CD14-positive monocyte (primary cell): ENCODE measurements at regions of chr5 and their contacts with region 1.

Region 1: DNA sequence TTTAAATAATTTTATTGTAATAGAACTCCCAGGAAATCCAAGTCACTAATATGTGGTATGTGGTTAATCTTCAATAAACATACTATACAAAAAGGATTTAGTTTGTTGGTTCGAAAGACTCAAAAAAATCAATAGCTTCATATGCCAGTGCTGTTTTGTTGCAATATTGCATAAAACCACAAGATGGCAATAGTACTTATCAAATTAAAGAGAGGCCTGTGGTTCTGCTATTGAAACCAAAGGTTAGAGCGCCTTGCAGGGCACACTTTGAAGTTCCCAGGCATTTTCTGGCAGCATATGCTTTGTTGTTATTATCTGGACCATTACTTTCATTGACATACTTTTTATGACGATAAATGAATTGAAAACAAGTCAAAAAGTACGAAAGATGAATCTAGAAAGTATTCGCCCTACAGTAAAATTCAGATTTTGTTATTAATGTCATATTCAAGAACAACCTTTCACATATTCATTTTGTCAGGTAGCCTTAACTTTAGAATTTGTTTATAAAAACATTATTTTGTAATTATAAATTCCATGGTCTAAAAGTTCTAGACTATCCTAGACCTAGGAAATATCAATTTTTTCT is 316.3 kb downstream of the MCTP1 start:
- DNase-seq: peak; percentile 48 to 74 (median 65)
- H3K4me3 ChIP-seq: no peak overlapping the region
- H3K4me3 Mint-ChIP-seq: no peak overlapping the region
- H3K27ac ChIP-seq: no peak overlapping the region
- H3K27ac Mint-ChIP-seq: peak overlapping the region in 2 of 7 donors; percentile 19 to 73
- H3K4me1 ChIP-seq: no peaks in the 10 kb centered on the region
- H3K4me1 Mint-ChIP-seq: peaks cover 2% of the 10 kb centered on the region
- H3K27me3 ChIP-seq: no peaks in the 10 kb centered on the region
- H3K27me3 Mint-ChIP-seq: no peaks in the 10 kb centered on the region
- CTCF ChIP-seq: peak; percentile 85

Region 2: DNA sequence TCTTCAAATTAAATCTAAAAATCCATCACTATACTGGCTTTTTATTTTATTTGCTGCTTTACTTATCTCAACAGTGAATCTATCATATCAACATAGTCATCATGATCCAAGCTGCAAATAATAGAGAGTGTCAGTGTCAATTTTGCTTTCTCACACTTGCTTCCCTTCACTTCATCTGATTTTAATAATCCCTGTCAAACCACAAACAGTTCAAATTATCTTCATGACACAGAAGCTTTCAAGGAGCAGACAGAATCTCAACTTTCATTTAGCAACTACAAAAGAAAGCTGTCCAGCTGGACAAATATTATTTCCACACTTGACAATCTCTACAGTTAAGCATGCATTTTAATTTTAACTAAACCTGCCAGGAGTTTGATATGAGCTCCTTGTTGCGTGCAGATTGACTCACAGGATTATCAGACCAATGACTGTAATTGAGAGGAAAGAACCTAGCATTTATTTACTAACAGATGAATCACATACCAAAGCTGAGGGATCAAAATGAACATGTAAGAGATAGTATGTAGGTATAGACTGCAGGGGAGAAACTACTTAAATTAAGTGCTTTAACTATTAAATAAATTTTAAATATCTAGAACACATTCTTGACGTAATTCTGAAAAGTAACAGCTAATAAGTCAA is 406.2 kb before region 1 on chr5:
- intact Hi-C with region 1: no loop called
- DNase-seq: no peak
- H3K4me3 ChIP-seq: no peak overlapping the region
- H3K4me3 Mint-ChIP-seq: no peak overlapping the region
- H3K27ac ChIP-seq: no peak overlapping the region
- H3K27ac Mint-ChIP-seq: no peak overlapping the region
- H3K4me1 ChIP-seq: no peaks in the 10 kb centered on the region
- H3K4me1 Mint-ChIP-seq: no peaks in the 10 kb centered on the region
- H3K27me3 ChIP-seq: no peaks in the 10 kb centered on the region
- H3K27me3 Mint-ChIP-seq: peaks cover 0 to 3% (median 0%) of the 10 kb centered on the region in 3 donors
- CTCF ChIP-seq: no peak

Region 3: GRCh38 chr5:95057615-95058014 is 89.0 kb after region 1 on chr5:
- intact Hi-C with region 1: no loop called
- DNase-seq: peak in 1 of 3 donors; percentile 31
- H3K4me3 ChIP-seq: no peak overlapping the region
- H3K4me3 Mint-ChIP-seq: peak overlapping the region in 1 of 2 donors; percentile 41
- H3K27ac ChIP-seq: no peak overlapping the region
- H3K27ac Mint-ChIP-seq: peak overlapping the region in 1 of 7 donors; percentile 42
- H3K4me1 ChIP-seq: peaks cover 12 to 21% of the 10 kb centered on the region in 2 donors
- H3K4me1 Mint-ChIP-seq: peaks cover 23% of the 10 kb centered on the region
- H3K27me3 ChIP-seq: no peaks in the 10 kb centered on the region
- H3K27me3 Mint-ChIP-seq: no peaks in the 10 kb centered on the region
- CTCF ChIP-seq: no peak

Region 4: DNA sequence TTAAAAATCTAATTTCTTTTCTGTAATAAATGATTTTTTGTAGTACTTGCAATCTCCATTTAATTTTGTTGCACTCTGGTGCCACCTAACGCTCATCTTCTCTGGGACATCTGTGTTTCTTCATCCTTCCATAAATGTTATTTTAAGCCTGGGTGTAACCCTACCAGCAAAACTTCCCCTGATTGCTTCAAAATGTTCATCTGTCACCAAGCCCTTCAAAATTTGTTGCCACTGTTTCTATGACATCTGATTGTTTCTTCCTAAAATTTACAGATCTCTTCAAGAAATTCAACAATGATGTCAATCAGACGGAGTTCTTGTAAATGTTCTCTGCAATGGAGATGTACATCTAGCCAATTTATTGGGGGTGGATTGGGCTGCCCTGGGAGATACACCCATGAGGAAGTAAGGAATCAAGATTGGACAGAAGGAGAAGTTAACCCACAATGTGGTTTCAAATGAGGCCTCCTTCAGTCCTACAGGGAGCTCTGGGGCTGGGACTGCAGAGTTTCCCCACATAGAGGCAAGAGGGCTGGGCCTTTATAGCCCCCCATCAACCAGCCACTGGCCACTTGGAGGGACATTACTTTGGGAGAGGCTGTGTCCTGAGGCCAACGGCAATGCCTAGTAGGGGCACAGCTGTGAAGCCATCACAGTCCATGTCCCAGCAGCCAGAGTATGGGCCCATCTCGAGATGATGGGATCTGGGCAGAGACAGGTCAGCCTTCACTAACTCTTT is 293.0 kb after region 1 on chr5:
- intact Hi-C with region 1: loop called (anchors 5 kb)
- DNase-seq: peak; percentile 77 to 89 (median 83)
- H3K4me3 ChIP-seq: no peak overlapping the region
- H3K4me3 Mint-ChIP-seq: no peak overlapping the region
- H3K27ac ChIP-seq: peak overlapping the region; percentile 92 to 99
- H3K27ac Mint-ChIP-seq: peak overlapping the region; percentile 94 to 97 (median 96)
- H3K4me1 ChIP-seq: peaks cover 20 to 23% of the 10 kb centered on the region in 2 donors
- H3K4me1 Mint-ChIP-seq: peaks cover 24% of the 10 kb centered on the region
- H3K27me3 ChIP-seq: no peaks in the 10 kb centered on the region
- H3K27me3 Mint-ChIP-seq: no peaks in the 10 kb centered on the region
- CTCF ChIP-seq: peak; percentile 81